ENCODE measurements at regions of chr3 and their contacts with region 1.

Region 1: GRCh38 chr3:33131331-33132018 is 17.7 kb downstream of the CRTAP start:
- DNase-seq: peak; percentile 72
- CTCF ChIP-seq: peak; percentile 59

Region 2: GRCh38 chr3:32865405-32865804 is 266.1 kb before region 1 on chr3:
- in situ Hi-C with region 1: no loop called
- DNase-seq: no peak
- CTCF ChIP-seq: no peak

Region 3: DNA sequence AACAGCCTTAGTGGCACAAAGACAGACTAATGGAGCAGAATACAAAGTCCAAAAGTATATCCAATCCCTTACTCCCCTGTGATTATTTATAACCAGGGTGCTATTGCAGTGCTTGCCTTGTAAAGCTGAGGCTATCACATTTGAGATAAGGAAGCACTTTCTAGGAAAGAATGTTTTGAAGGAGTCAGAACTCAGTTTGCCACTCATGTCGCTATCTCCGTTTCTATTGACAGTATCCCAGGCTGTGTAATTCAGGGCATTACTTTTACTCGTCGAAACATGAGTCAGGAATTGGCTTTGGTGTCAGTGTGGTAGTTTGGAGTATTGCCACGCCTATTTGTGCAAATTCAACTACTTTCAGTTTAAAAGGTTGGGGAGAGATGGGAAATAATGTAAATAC is 224.1 kb after region 1 on chr3:
- in situ Hi-C with region 1: loop called (anchors 10 kb)
- DNase-seq: no peak
- CTCF ChIP-seq: no peak

Region 4: GRCh38 chr3:33798411-33799201 is 667.1 kb after region 1 on chr3 and contains the start of gene PDCD6IP:
- in situ Hi-C with region 1: loop called (anchors 25 kb)
- DNase-seq: peak; percentile 90
- CTCF ChIP-seq: no peak